Posterior cingulate gyrus (tissue), 11 donors: ENCODE measurements at regions of chrX and their contacts with region 1.

Region 1: DNA sequence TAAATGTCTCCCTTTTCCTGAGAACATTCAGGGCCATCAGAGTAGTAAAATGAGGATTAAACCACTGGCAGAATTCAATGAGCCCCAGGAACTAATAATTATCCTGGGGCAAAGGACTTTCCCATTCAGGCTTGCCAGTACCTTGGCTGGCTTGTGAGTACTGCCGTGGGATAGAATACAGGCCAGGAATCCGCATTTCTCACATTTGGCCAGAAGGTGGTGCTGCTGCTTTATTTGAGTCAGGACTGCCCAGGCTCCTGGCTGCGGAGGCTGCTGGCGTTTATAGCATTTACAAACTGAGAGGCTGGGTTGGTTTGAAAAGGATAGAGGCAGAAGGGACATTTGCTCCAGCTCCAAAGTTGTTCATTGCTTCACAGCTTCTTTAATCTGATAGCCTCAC is 91.4 kb downstream of the RTL9 start:
- DNase-seq: peak; percentile 65 to 96 (median 75)

Region 2: GRCh38 chrX:110210417-110211139 is 239.5 kb before region 1 on chrX:
- intact Hi-C with region 1: no loop called
- DNase-seq: no peak

Region 3: DNA sequence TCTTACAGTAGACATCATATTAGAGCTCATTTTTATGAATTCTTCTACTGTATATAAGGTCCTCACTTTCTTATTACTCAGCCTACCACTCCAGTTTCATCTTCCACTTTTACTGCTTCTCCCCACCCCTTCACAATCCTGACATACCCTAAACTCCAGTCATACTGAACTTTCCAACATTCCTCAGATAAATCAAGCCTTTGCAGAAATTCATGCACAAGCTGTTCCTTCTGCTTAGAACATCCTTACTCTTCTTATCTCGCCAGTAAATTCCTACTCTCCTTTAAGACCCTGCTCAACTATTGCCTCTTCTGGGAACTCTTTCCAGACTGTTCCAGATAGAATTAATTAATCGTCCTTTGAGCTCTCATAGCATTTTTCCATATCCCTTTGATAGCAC is 66.6 kb before region 1 on chrX:
- intact Hi-C with region 1: no loop called
- DNase-seq: no peak

Region 4: GRCh38 chrX:110665223-110666002 is 215.4 kb after region 1 on chrX:
- intact Hi-C with region 1: loop called (anchors 5 kb)
- DNase-seq: peak in 7 of 10 donors; percentile 2 to 77 (median 19)

Region 5: DNA sequence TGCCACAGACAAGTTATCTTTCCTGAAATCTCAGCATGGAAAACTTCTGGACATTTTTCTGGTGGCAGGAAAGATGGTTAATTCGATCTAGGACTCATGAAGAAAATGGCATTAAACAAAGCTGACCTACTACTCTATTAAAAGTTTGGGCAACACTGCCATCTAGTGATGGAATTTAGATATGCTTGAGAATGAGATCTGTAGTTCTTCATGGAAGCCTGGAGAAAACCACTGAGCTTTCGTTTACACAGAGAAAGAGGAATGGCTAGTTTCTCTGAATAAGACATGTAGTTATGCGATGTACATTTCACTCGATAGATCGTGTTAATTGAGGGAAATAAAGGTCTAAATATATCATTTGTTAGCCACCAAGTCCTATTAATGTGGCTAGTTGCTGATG is 397.3 kb after region 1 on chrX:
- intact Hi-C with region 1: loop called (anchors 1 kb)
- DNase-seq: no peak